Activated CD4-positive, alpha-beta memory T cell treated with anti-CD3 and anti-CD28 coated beads for 36 hours (primary cell): ENCODE measurements at regions of chr17 and their contacts with region 1.

Region 1: GRCh38 chr17:21284319-21285163 is at the start of gene MAP2K3:
- DNase-seq: peak; percentile 99
- H3K4me3 Mint-ChIP-seq: peak within 1 kb of the TSS; percentile 98
- H3K27ac Mint-ChIP-seq: peak within 1 kb of the TSS; percentile 89
- H3K4me1 Mint-ChIP-seq: peaks cover 50% of the 10 kb centered on the region
- H3K27me3 Mint-ChIP-seq: no peaks in the 10 kb centered on the region
- total RNA-seq, gene MAP2K3: 132 to 134 TPM

Region 2: DNA sequence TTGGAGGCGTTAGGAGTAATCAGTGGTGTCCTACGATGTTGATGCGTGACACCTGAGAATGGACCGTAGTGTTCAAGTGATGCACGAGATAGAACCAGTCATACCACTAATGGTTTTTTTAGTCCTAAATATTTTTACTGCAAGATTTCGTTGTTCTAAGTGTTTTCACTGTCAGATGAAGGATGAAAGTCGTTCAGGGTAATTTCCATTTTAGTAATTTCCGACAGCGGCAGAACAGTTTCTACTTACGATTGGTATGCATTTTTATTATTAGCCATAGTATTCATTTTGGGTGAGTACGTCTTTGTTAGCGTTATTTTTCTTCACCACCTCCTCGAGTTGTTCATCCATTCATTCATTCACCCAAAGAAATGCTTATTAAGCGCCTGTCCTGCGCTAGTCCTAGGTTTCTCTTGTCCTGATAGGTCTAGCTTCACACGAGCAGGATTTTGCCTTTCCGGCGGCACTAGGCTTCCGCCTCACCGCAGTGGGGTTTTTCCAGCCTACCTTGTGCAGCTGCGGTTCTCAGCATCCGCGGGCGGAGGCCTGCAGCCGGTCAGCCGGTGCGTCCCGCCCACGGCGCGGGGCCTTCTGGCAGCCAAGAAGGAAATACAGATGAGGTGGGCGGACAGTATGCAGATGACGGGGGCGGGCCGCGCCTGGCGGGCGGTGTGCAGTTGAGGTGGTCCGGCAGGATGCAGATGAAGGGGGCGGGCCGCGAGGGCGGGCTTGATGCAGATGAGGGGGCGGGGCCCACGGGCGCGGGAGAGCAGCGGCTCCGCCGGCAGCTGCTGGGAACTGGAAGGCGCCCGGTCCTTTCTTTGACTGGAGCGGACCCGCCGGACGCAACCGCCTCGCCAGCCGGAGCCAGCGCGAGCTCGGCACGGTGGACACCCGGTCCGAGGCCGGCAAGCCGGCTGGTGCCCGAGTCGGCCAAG is 1129.0 kb before region 1 on chr17:
- CTCF ChIA-PET with region 1: no interaction called
- POLR2A ChIA-PET with region 1: no interaction called
- intact Hi-C with region 1: loop called (anchors 10 kb)
- DNase-seq: peak; percentile 97
- H3K4me3 Mint-ChIP-seq: no peak overlapping the region
- H3K27ac Mint-ChIP-seq: no peak overlapping the region
- H3K4me1 Mint-ChIP-seq: peaks cover 4% of the 10 kb centered on the region
- H3K27me3 Mint-ChIP-seq: peaks cover 4% of the 10 kb centered on the region

Region 3: DNA sequence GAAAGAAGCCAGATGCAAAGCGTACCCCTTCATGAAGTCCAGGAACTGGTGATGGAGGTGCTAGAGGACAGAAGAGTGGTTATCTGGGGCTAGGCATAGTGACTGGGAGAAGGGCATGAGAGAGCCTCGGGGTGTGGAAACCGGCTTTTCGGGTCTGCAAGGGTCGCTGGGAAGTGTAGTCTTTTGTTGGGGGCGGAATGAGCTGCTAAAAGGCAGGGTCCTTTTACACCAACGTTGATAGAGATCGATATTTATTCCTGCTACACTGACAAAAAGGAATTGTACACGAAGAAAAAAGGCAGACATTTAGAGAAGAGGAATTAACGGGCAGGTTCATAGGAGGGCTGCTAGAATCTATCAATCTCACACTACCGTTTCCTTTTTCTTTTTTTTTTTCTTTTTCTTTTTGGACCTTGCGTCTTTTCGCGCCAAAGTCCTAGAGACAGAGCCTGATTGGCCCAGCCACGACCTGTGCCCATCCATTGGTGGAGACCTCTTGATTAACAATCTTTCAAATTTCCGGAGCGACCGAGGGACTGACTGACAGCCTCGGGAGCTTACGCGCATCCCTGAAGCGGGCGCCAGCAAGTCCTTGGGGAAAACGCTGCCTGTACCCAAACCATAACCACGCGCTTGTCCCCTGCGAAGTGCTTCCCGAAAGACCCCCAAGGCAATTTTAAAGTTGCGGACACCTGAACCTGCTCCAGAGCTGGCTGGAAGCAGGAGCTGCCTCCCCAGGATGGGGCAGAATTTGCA is 185.4 kb before region 1 on chr17:
- CTCF ChIA-PET with region 1: no interaction called
- POLR2A ChIA-PET with region 1: interaction called, 7 read pairs
- intact Hi-C with region 1: loop called (anchors 1 kb)
- DNase-seq: peak; percentile 87
- H3K4me3 Mint-ChIP-seq: peak overlapping the region; percentile 97
- H3K27ac Mint-ChIP-seq: peak overlapping the region; percentile 88
- H3K4me1 Mint-ChIP-seq: peaks cover 4% of the 10 kb centered on the region
- H3K27me3 Mint-ChIP-seq: no peaks in the 10 kb centered on the region

Region 4: DNA sequence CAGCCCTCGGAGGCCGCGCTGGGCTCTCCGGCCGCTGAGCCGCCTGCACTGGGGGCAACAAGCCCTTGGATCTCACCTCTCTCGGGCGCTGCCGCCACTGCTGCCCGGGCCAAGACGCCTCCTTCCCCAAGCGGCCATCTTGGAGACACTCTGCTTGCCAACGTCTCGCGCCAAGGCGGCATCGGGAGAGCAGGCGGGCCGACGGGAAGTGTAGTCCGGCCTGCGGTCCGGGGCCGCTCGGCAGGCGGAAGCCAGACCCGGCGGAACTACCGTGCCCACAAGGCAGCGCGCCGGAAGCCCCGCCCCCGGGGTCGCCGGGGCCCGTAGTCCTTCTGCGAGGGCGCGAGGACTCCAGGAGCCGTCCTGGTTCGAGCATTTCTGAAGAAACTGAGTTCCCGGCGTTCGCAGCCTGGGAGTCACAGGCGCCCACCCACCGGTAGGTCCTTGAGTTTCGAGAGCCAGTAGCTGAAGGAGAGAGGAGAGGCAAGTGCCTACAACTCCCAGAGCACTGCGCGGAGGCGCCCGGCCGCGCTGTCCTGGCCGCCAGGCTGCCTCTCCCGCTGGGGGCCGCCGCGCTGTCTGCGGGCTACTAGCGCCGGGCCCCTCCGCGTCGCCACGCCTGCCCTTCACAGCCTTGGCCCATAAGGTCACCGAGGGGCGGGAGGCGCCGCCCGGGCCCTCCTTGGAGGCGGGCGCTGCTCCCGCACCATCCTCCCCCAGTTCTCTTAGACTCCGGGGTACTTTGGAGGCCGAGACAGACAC is 70.3 kb before region 1 on chr17 and contains the start of gene TMEM11:
- CTCF ChIA-PET with region 1: interaction called, 3 read pairs
- POLR2A ChIA-PET with region 1: no interaction called
- intact Hi-C with region 1: loop called (anchors 1 kb)
- DNase-seq: peak; percentile 96
- H3K4me3 Mint-ChIP-seq: peak within 1 kb of the TSS; percentile 84
- H3K27ac Mint-ChIP-seq: peak within 1 kb of the TSS; percentile 91
- H3K4me1 Mint-ChIP-seq: peaks cover 68% of the 10 kb centered on the region
- H3K27me3 Mint-ChIP-seq: no peaks in the 10 kb centered on the region
- total RNA-seq, gene TMEM11: 24.0 to 27.2 TPM

Region 5: DNA sequence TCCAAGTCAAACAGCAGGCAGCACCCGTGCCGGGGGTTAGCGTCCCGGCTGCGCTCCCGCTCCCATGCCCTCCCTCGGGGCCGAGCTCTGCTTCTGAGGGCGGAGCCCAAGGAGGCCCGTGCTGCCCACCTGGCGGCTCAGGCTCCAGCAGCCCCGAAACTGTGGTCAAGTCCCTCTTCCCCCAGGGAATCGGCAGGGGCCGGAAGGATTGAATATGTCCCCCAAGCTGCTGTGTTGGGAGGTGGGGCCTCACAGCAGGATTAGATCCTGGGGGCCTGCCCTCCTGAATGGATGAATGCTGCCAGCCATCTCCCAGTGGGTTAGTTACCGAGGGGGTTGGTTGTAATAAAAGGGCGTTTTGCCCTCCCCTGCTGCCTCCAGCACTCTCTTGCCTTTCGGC is 33.9 kb after region 1 on chr17:
- CTCF ChIA-PET with region 1: interaction called, 5 read pairs
- POLR2A ChIA-PET with region 1: no interaction called
- intact Hi-C with region 1: loop called (anchors 2 kb)
- DNase-seq: no peak
- H3K4me3 Mint-ChIP-seq: no peak overlapping the region
- H3K27ac Mint-ChIP-seq: no peak overlapping the region
- H3K4me1 Mint-ChIP-seq: peaks cover 7% of the 10 kb centered on the region
- H3K27me3 Mint-ChIP-seq: peaks cover 2% of the 10 kb centered on the region

Region 6: DNA sequence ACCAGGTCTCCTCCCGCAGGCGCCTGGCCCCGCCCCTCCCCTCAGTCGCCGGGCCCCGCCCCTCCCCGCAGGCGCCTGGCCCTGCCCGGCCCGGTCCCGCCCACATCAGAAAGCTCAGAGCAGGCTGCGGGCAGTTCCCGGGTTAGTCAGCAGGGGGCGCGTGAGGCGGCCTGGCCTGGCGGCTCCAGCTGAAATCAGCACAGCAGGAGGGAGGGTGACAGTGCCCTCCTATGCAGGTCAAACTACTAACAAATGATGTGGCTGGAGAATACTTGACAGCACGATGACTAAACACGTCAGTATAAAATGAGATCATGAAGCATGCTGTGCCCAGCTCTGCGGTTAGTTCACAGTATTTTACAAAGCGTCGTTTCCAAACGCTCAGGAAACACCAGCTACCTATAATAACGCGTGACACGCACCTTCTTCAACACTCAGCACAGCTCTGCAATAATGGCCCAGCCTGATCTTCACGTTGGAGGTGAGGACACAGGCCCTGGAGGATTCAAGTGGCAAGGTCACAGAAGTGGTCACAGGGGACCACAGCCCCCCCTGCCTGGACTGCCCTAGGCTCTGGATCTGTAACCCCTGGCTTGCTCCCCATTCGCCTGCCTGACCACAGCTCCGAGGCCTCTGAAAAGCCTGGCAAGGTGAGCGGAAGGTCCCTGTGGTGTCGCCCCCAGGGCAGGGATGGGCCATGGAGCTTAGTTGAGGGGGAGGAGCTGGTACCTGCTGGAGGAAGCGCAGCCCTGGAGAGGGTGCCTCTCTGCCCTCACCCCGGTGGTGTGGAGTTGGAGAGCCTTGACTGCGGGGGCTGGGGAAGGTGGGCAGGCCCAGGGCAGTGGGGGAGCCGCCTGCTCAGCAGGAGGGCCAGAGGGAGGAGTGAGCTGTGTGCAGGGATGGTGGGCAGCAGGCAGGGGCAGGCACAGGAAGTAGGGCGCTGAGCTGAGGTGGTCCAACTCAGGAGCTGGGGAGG is 172.8 kb after region 1 on chr17:
- CTCF ChIA-PET with region 1: interaction called, 14 read pairs
- POLR2A ChIA-PET with region 1: no interaction called
- intact Hi-C with region 1: loop called (anchors 2 kb)
- DNase-seq: peak; percentile 97
- H3K4me3 Mint-ChIP-seq: no peak overlapping the region
- H3K27ac Mint-ChIP-seq: peak overlapping the region; percentile 53
- H3K4me1 Mint-ChIP-seq: peaks cover 14% of the 10 kb centered on the region
- H3K27me3 Mint-ChIP-seq: peaks cover 6% of the 10 kb centered on the region

Region 7: DNA sequence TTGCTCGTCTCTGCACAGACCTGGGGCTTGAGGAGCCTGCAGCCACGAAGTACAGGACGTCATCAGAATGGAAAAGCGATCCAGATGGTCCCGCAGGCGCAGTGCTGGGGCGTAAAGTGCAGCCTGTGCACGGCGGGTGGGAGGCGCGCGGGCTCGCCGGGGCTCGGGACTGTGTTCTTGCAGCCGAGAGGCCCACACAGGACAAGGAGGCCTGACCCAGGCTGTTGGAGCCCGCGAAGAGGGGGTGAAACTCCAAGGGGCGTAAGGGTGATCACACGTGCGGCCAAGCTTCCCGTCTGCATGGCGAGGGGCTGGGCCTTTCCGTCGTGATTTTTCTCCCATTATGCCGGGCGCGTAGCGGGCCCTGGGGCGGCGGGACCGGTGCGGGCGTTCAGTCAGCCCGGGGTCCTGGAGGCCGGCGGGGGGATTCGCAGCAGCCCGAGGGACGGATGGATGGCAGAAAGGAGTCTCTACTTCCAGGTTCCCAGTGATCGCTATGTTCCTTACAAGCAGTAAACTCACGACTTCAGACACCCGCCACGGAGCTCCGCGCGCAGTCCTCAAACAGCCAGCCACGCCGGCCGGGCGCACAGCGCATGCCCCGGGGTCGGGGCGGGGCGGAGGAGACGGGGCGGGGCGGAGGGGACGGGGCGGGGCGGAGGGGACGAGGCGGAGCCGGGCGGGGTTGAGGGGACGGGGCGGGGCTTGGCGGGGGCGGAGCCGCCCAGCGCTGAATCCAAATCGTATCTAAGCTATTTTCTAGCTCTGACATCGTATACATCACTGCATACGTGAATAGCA is 266.7 kb after region 1 on chr17:
- CTCF ChIA-PET with region 1: no interaction called
- POLR2A ChIA-PET with region 1: interaction called, 4 read pairs
- intact Hi-C with region 1: loop called (anchors 5 kb)
- DNase-seq: peak; percentile 86
- H3K4me3 Mint-ChIP-seq: peak overlapping the region; percentile 88
- H3K27ac Mint-ChIP-seq: peak overlapping the region; percentile 66
- H3K4me1 Mint-ChIP-seq: peaks cover 29% of the 10 kb centered on the region
- H3K27me3 Mint-ChIP-seq: peaks cover 13% of the 10 kb centered on the region